ENCODE measurements at regions of chr11 and their contacts with region 1.

Region 1: DNA sequence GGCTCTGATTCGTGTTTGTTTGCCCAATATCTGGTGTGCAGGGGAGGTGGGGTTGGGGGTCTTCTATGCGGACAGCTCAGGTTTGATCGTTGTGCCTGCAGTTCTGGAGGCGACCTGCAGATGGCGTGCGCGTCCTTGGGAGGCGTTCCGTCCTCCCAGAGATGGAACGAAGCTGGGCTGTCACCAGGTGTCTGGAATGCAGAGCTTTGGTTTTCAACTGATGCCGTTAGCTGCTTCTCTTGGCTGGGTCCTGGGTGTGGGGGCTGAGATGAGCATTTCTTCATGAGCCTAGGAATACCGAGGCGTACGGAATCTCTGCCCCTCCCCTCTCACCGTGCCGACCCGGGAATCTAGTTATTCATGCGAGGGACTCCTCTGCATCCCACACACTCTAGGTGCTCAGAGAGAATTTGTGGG is 98.6 kb downstream of the CEP164 start:
- DNase-seq: peak; percentile 72
- H3K27ac ChIP-seq: no peak overlapping the region
- CTCF ChIP-seq: peak; percentile 96

Region 2: DNA sequence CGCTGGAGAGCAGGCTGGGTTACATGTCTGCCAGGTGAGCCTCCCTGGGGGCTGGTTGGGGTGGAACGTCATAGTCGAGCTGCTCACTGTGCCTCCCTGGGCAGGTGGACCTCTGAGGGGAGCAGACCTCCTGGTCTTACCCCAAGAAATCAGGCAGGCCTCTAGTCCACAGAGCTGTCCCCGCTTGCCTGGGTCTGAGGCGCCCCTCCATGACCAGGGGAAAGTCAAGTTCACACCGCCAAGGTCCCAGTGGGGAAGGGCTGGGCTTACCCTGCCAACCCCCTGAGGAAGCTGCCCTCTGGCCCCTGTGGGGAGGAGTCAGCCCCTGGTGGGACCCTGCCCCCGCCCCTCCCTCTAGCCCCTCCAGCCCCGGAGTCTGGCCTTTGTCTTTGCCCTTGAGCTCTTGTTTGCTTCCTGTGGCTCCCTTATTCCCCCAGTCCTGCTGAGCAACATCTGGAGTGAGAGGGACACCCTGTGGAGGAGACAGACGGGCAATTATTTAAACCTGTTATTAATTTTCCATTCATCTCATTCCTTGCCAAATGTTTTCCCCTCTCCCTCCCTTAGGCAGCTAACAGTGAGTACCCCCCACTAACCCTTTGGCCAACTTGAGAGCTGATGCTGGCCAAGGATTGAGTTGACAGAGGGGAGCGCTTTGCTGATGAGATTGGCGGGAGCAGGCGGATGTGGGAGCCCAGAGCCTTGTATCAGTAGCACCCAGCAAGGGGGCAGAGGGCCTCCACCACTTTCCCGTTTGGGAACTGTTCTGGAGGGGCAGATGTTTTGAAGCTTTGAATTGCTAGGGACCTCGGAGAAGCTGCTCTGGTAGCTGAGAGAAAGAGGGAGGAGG is 15.2 kb before region 1 on chr11:
- CTCF ChIA-PET with region 1: interaction called, 20 read pairs
- POLR2A ChIA-PET with region 1: no interaction called
- DNase-seq: no peak
- H3K27ac ChIP-seq: no peak overlapping the region
- CTCF ChIP-seq: no peak

Region 3: DNA sequence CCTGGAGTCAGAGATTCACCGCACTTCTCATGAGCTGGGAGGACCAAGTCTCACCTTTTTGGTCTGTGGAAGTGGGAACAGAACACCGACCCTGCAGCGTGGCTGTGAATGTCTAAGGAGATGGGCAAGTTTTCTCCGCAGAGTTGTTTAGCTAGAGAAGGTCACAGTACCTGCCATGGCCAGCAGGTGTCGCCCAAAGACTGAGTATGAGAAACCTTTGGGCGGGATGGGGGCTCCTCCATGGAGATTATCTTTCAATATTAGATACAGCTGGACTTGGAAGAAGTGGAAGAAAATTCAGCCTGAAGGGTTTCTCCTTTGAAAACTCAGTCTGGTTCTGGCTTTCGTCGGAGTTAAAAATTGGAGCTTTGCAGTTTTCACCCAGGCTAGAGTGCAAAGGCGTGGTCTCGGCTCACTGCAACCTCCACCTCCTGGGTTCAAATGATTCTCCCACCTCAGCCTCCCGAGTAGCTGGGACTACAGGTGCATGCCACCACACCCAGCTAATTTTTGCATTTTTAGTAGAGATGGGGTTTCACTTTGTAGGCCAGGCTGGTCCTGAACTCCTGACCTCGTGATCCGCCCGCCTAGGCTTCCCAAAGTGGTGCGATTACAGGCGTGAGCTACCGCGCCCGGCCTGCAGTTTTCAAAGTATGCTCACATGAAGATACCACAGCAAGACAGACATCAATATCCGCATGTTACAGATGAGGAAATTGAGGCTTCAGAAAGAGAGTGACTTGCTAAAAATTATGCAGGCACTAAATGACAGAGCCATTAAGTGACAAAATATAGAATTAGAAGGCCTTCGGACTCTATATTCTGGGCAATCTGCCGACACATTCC is 381.4 kb after region 1 on chr11:
- CTCF ChIA-PET with region 1: interaction called, 56 read pairs
- POLR2A ChIA-PET with region 1: no interaction called
- DNase-seq: peak; percentile 58
- H3K27ac ChIP-seq: no peak overlapping the region
- CTCF ChIP-seq: peak; percentile 76

Region 4: DNA sequence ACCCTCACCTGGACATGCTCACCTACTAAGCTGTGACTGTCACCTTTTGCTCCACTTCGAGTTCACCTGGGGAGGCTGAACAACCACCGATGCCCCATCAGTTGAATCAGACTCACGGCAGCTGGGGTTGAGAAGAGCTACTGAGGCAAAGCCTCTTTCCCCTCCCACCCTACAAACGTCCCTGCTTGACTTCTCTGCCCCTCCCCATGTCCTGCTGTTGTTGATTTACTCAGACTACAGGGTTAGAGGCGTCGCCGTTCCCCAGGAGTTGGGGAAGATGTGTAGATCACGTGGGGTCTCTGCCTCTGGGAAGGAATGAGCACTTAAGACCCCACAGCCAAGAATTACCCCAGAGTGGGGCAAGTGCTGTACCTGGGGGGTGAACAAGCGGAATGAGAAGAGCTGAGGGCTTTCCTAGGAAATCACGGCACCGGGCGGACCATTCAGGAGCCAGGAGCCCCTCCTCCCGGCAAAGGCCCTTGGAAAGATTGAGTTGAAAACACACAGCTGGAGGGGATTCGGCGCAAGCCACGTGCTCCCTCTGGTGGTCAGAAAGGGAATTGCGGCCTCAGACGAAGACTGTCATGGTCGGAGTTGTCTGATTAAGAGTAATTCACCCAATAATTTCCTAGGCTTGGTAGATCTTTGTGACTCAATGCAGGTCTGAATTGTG is 391.2 kb after region 1 on chr11:
- CTCF ChIA-PET with region 1: interaction called, 84 read pairs
- POLR2A ChIA-PET with region 1: no interaction called
- DNase-seq: peak; percentile 60
- H3K27ac ChIP-seq: no peak overlapping the region
- CTCF ChIP-seq: peak; percentile 96